Adrenal gland (tissue), 19 donors: ENCODE measurements at regions of chr2 and their contacts with region 1.

Region 1: GRCh38 chr2:171173089-171173488 is 12.4 kb upstream of the TLK1 start:
- DNase-seq: no peak
- H3K4me3 ChIP-seq: no peak overlapping the region
- H3K27ac ChIP-seq: no peak overlapping the region
- H3K4me1 ChIP-seq: no peaks in the 10 kb centered on the region
- H3K27me3 ChIP-seq: no peaks in the 10 kb centered on the region
- CTCF ChIP-seq: no peak
- POLR2A ChIP-seq: no peak

Region 2: DNA sequence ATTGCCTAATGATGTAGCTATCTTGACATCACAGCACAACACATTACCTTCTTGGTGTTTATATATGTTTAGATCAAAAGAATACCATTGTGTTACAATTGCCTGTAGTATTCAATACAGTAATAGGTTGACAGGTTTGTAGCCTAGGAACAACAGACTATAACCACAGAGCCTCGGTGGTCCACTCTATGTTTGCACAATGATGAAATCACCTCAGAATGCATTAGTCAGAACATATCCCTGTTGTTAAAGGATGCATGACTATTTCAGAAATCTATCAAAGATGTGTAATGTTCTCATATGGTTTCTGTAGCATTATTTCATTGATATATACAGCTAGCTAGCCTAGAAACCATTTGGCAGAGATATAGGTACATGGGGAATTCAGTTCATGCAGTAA is 1357.2 kb before region 1 on chr2:
- intact Hi-C with region 1: no loop called
- DNase-seq: no peak
- H3K4me3 ChIP-seq: no peak overlapping the region
- H3K27ac ChIP-seq: no peak overlapping the region
- H3K4me1 ChIP-seq: no peaks in the 10 kb centered on the region
- H3K27me3 ChIP-seq: no peaks in the 10 kb centered on the region
- CTCF ChIP-seq: no peak
- POLR2A ChIP-seq: no peak

Region 3: GRCh38 chr2:170711774-170712652 is 461.1 kb before region 1 on chr2:
- intact Hi-C with region 1: no loop called
- DNase-seq: peak in 3 of 7 donors; percentile 19 to 23 (median 21)
- H3K4me3 ChIP-seq: peak overlapping the region in 1 of 4 donors; percentile 6
- H3K27ac ChIP-seq: no peak overlapping the region
- H3K4me1 ChIP-seq: peaks cover 10 to 19% of the 10 kb centered on the region in 2 donors
- H3K27me3 ChIP-seq: peaks cover 23% of the 10 kb centered on the region
- CTCF ChIP-seq: no peak
- POLR2A ChIP-seq: no peak

Region 4: GRCh38 chr2:171086352-171087290 is 86.5 kb before region 1 on chr2:
- intact Hi-C with region 1: no loop called
- DNase-seq: peak; percentile 39 to 81 (median 58)
- H3K4me3 ChIP-seq: peak overlapping the region in 1 of 4 donors; percentile 36
- H3K27ac ChIP-seq: peak overlapping the region in 1 of 5 donors; percentile 2
- H3K4me1 ChIP-seq: no peaks in the 10 kb centered on the region
- H3K27me3 ChIP-seq: no peaks in the 10 kb centered on the region
- CTCF ChIP-seq: peak; percentile 32 to 65 (median 58)
- POLR2A ChIP-seq: no peak

Region 5: DNA sequence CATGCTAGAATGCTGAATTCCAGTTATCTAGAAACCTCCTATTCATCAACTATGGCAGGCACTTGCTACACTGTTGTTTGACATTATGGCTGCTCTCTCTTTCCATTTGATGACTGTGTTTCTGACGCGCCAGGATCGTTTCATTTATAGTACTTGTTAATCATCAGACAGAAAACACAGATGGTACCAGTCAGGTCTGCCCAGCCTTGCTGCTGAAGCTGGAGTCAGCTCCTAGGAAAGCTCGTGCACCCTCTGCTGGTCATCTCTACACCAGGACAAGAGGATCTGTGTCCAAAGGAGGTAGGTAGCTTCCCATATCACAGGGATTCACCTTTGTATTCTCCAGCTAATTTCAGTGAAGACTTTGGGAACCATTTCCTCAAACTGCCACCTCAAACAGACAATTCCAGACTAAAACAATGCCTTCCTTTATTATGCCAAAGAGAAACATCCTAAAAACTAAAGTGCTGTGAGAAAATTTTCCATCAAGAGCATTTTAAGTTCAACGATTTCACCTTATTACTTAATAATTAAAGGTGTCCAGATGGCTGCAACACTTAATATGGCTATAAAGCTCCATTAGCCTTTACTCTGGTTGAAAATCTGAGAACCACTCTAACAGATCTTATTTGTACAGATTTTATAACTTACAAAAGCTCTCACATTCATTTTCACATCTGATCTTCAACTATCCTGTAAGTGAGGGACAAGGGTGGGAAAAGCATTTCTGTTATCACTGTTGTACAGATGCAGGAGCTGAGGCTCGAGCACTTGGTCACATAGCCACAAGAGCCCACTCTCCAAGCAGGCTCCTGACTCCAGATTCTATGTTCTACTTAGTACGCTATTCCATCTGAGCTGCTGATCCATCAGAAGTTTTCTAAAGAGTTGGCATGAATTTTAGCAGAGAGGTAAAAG is 243.2 kb after region 1 on chr2:
- intact Hi-C with region 1: loop called in 1 of 2 experiments (anchors 10 kb)
- DNase-seq: peak; percentile 90 to 98 (median 96)
- H3K4me3 ChIP-seq: no peak overlapping the region
- H3K27ac ChIP-seq: peak overlapping the region in 1 of 5 donors; percentile 65
- H3K4me1 ChIP-seq: peaks cover 0 to 4% of the 10 kb centered on the region in 2 donors
- H3K27me3 ChIP-seq: no peaks in the 10 kb centered on the region
- CTCF ChIP-seq: peak; percentile 79 to 89 (median 85)
- POLR2A ChIP-seq: peak in 1 of 2 donors; percentile 26